HEK293 (cell line): ENCODE measurements at regions of chr1 and their contacts with region 1.

Region 1: DNA sequence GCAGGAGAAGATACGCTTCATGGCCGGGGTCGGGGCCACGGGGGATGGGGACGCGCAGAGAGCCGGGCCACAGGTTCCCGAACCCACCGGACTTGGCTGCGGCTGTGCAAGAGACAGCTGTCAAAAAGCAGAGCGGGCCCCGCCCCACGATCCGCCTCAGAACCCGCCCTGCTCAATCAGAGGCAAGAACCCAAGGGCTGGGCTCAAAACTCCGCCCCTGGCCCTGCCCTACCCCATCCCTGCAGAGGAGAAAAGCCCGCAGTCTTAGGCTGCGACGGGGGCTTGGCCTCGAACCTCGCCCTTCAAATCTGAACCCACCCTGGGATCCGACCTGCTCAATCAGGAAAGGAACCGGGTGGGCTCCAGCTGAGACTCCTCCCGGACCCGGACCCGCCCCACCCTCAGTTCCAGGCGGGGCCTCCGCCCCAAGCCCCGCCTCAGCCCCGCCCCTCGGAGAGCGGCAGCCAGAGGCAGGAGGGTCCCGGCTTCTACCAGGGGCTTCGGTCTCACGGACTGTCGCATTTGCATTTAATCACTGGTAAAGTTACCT is at the start of gene ANKRD35:
- H3K4me3 ChIP-seq: peak within 1 kb of the TSS; percentile 70
- H3K27ac ChIP-seq: no peak within 1 kb of the TSS
- H3K4me1 ChIP-seq: peaks cover 4% of the 10 kb centered on the region
- CTCF ChIP-seq: no peak

Region 2: DNA sequence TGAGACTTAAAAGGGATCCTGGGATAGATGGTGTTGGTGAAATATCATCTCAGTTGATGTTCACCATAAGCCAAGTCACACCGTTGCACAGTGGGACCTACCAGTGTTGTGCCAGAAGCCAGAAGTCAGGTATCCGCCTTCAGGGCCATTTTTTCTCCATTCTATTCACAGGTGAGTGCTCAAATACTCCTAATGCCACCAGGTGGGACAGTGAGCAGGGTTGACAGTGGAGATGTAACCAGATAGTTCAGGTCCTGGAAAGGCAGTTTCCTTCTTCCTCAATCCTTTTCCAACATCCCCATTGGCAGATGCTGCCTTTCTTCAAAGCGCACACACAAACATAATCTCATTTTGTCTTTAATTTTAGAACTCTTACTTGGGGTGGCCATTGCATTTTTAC is 154.9 kb before region 1 on chr1:
- CTCF ChIA-PET with region 1: no interaction called
- POLR2A ChIA-PET with region 1: no interaction called
- H3K4me3 ChIP-seq: no peak overlapping the region
- H3K27ac ChIP-seq: no peak overlapping the region
- H3K4me1 ChIP-seq: no peaks in the 10 kb centered on the region
- CTCF ChIP-seq: no peak

Region 3: GRCh38 chr1:145750426-145750825 is 135.4 kb before region 1 on chr1:
- CTCF ChIA-PET with region 1: no interaction called
- POLR2A ChIA-PET with region 1: no interaction called
- H3K4me3 ChIP-seq: no peak overlapping the region
- H3K27ac ChIP-seq: no peak overlapping the region
- H3K4me1 ChIP-seq: peaks cover 3% of the 10 kb centered on the region; the same call in 1 of the 2 replicates
- CTCF ChIP-seq: no peak

Region 4: GRCh38 chr1:145906954-145907753 is 21.3 kb after region 1 on chr1:
- CTCF ChIA-PET with region 1: interaction called, 222 read pairs
- POLR2A ChIA-PET with region 1: no interaction called
- H3K4me3 ChIP-seq: no peak overlapping the region
- H3K27ac ChIP-seq: no peak overlapping the region
- H3K4me1 ChIP-seq: no peaks in the 10 kb centered on the region
- CTCF ChIP-seq: no peak